Mammary epithelial cell (primary cell): ENCODE measurements at regions of chr10 and their contacts with region 1.

Region 1: DNA sequence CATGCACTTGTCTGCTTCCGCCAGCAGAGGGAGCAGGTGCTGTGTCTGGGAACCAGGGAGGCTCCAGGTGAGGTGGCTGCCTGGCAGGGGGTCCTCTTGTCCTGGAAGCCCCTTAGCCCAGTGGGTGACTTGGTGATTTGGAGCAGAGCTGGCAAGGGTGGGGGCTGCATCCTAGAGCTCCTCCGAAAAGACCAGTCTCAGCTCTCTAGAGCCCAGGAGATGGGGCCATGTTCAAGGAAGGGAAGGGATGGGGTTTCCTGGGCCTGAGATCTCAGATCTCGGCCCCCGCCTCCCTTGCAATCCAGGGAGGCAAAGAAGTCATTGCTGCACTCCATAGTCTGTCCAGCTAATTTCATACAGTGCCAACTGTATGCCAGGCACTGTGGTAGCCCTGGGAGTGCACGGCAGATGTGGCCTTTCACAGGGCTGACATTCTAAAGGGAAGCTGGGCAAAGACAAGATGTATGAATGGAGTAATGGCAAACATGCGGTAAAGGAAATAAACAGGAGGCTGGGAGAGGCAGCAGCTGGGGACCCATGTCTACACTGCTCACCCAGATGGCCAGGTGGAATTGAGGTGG is 20.4 kb upstream of the SFRP5 start:
- DNase-seq: peak; percentile 39
- H3K4me3 ChIP-seq: no peak overlapping the region
- H3K27ac ChIP-seq: no peak overlapping the region
- H3K4me1 ChIP-seq: no peaks in the 10 kb centered on the region
- H3K27me3 ChIP-seq: no peaks in the 10 kb centered on the region
- CTCF ChIP-seq: peak; percentile 90 to 98

Region 2: DNA sequence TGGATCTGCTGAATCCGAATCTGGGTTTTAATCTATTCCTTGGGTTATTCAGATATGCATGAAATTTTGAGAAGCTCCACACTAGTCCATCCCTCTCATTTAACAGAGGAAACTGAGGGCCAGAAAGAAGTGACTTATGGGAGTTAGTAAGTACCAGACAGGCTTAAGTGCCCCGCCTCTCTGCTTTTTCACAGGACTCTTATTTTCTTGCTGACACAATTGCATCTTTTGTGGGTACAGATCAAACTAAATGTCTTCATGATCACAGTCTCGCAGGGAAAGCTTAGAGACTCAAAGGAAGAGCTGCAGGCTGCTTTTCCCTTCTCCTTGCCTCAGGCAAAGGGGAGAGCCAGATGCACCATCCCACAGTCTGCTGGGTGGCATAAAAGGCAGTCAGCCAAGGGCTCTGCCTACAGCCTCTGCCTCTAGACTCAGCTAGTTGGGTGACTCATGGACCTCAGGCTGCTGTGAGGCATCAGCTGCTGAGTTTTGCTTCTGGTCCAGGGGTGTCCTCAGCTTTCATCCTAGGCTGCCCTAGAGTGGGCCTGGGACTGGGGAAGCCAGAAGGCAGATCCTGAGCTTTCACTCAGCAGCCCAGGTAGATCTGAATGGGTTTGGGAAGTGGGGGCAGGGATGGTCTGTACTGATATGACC is 69.0 kb after region 1 on chr10:
- CTCF ChIA-PET with region 1: no interaction called
- dilution Hi-C with region 1: loop called (anchors 5 kb)
- in situ Hi-C with region 1: loop called (anchors 5 kb)
- intact Hi-C with region 1: no loop called
- DNase-seq: peak; percentile 93
- H3K4me3 ChIP-seq: no peak overlapping the region
- H3K27ac ChIP-seq: no peak overlapping the region
- H3K4me1 ChIP-seq: peaks cover 10% of the 10 kb centered on the region
- H3K27me3 ChIP-seq: no peaks in the 10 kb centered on the region
- CTCF ChIP-seq: no peak

Region 3: DNA sequence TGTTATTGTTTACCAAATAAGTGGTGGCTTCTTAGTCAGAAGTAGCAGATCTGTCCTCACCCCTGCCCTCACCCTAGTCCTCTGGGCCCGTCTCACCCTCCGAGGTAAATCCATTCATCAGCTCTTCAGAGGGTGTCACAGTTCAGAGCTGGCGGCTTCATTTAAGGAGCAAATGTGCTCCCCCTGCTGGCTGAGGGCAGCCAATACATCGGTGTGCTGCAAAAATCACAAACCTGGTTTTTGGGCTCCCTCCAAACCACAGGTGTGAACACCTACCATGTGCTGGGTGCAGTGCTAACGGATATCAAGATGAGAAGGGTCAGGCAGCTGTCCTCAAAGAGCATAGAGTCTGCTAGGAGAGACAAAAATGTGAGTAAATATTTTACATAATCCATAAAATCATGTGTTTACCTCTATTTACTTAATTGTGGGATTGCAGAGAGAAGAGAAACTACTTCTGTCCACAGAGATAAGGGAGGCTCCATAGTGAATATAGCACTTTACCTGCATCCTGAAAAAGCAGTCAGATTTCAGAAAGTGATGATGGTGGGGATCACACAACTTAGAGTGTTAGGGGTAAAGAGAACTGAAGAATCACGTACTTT is 253.7 kb after region 1 on chr10:
- CTCF ChIA-PET with region 1: interaction called, 3 read pairs
- dilution Hi-C with region 1: no loop called
- in situ Hi-C with region 1: loop called (anchors 25 kb)
- intact Hi-C with region 1: loop called (anchors 10 kb)
- DNase-seq: peak; percentile 53
- H3K4me3 ChIP-seq: no peak overlapping the region
- H3K27ac ChIP-seq: no peak overlapping the region
- H3K4me1 ChIP-seq: no peaks in the 10 kb centered on the region
- H3K27me3 ChIP-seq: no peaks in the 10 kb centered on the region
- CTCF ChIP-seq: peak; percentile 90 to 95